GM18951 (cell line): ENCODE measurements at regions of chr14 and their contacts with region 1.

Region 1: GRCh38 chr14:102316743-102317563 is 2.6 kb upstream of the ZNF839 start:
- POLR2A ChIP-seq: peak; percentile 30

Region 2: DNA sequence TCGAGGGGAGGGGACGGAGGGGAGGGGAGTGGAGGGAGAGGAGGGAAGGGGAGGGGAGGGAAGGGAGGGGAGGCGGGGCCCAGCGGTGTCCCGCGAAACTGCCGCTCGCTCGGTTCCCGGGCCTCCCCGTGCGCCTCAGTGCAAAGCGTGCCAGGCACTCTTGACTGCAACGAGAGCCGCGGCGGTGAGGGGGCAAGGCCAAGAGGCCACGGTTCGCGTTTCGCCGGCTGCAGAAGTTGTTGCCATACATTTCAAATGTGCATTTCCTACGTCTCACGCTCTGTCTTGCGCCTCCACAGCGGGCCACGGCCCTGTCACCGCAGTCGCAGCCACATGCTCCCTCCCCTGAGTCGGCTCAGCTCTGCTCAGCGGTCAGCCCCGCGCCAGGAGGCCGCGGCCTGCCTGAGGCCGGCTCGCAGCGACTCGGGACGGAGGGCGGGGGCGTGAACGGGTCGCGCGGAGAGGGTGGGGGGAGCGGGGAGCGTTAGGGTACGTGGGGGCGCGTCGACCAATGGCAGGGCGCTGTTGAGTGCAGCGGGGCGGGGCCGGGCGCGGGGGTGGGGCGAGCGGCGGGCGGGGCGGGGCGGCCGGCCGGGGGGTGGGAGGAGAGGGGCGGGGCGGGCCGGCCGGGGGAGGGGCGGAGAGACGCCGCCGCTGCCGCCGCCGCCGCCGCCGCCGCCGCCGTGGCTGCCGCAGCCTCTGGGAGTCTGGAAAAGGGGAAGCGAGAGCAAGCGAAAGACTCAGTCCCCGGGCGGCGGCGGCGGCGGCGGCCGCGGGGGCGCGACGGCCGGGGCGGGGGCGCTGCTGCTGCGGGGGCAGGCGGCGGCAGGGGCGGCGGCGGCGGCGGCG is 555.7 kb before region 1 on chr14 and contains the start of gene PPP2R5C:
- in situ Hi-C with region 1: loop called (anchors 25 kb)
- POLR2A ChIP-seq: peak; percentile 22

Region 3: GRCh38 chr14:101964297-101965144 is 352.4 kb before region 1 on chr14 and contains the start of gene DYNC1H1:
- in situ Hi-C with region 1: loop called (anchors 10 kb)
- POLR2A ChIP-seq: peak; percentile 93

Region 4: DNA sequence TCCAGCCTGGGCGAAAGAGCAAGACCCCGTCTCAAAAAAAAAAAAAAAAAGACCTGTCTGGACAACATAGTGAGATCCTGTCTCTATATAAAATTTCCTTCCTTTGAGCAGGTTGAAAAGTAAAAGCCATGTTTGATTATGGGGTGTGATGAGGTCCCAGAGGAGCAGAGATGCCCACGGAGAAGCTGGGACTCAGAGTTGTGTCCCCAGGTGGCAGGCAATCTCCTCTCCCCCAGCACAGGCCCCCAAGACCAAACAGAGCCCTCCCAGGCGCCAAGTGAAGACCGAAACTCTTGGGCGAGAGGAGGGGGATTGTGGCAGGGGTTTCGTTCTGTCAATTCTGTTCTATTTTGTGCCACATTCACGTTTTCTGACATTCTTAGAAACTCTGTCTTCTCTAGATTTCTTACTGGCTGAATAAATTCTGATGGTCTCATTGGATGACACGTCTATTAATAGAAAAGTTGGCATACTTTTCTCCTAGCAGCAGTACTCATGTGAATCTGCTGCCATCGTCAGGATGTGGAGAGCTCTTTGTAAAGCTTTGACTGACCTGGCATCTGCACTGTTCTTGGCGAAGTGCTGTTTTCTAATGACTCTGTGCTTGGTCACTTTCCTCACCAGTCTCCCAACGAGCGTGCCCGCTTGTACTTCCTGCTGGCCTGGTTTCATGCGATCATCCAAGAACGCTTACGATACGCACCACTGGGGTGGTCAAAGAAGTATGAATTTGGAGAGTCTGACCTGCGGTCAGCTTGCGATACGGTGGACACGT is 273.5 kb before region 1 on chr14:
- in situ Hi-C with region 1: no loop called
- POLR2A ChIP-seq: no peak